ENCODE measurements at regions of chr16 and their contacts with region 1.

Region 1: DNA sequence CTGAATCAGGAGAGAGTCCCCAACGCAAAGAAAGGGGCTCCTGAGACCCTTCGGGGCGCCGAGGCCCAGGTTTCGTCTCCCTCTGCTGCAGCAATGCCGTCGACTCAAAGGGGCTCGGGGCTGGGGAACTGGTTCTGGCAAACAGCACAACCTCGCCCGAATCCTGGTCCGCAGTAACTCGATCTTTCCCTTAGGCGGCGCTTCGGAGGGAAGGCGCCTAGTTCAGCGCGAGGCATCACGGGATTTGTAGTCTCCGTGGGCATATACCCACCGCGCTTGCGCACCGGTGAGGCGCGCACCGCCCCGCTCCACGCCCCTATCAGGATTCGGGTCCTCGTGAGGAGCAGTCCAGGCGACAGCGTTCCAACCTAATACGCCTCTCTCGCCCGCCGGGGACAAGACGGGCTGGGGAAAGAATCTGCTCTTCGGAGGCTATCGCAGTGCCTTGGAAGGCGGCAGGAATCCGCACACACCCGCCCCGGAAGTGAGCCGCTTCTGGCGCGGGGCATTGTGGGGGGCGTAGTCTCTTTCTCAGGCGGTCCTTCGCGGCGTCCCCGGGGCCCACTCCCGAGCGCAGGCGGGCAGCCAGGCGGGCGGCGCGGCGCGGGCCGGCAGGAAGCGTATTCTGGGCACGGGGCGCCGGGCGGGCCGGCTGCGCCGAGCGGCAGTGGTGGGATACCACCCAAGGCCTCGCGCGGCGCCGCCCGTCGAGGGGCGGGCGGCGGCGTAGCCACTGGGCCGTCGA is at the start of gene THAP11:
- DNase-seq: peak; percentile 96
- ATAC-seq: peak; percentile 46
- H3K4me3 ChIP-seq: peak within 1 kb of the TSS; percentile 80 to 97 (median 92)
- H3K27ac ChIP-seq: peak within 1 kb of the TSS; percentile 92
- H3K4me1 ChIP-seq: peaks cover 52% of the 10 kb centered on the region
- H3K27me3 ChIP-seq: no peaks in the 10 kb centered on the region; a peak in 1 of 5 replicates
- CTCF ChIP-seq: peak; percentile 99
- EP300 ChIP-seq: 0 out of 4 replicates have a peak, but pooled peaks of 1 of the 2 experiments have one; percentile 2
- POLR2A ChIP-seq: peak in 1 of 2 experiments; percentile 68; a peak in 1 of 4 replicates
- RAD21 ChIP-seq: peak; percentile 54
- total RNA-seq, gene THAP11: 53.4 and 53.8 TPM in 2 replicates

Region 2: GRCh38 chr16:67767953-67768352 is 74.0 kb before region 1 on chr16:
- CTCF ChIA-PET with region 1: no interaction called
- POLR2A ChIA-PET with region 1: no interaction called
- in situ Hi-C with region 1: no loop called
- intact Hi-C with region 1: no loop called
- DNase-seq: no peak
- ATAC-seq: no peak
- H3K4me3 ChIP-seq: no peak overlapping the region
- H3K27ac ChIP-seq: no peak overlapping the region
- H3K4me1 ChIP-seq: no peaks in the 10 kb centered on the region
- H3K27me3 ChIP-seq: no peaks in the 10 kb centered on the region
- CTCF ChIP-seq: no peak
- EP300 ChIP-seq: no peak
- POLR2A ChIP-seq: no peak
- RAD21 ChIP-seq: no peak

Region 3: GRCh38 chr16:67857502-67858233 is 15.7 kb after region 1 on chr16:
- CTCF ChIA-PET with region 1: no interaction called
- POLR2A ChIA-PET with region 1: interaction called, 21 read pairs
- in situ Hi-C with region 1: no loop called
- intact Hi-C with region 1: loop called (anchors 1 kb)
- DNase-seq: peak; percentile 96
- ATAC-seq: peak; percentile 94
- H3K4me3 ChIP-seq: peak overlapping the region in 1 of 3 experiments; percentile 35; a peak in 2 of 6 replicates
- H3K27ac ChIP-seq: peak overlapping the region; percentile 89
- H3K4me1 ChIP-seq: peaks cover 64% of the 10 kb centered on the region
- H3K27me3 ChIP-seq: no peaks in the 10 kb centered on the region
- CTCF ChIP-seq: no peak
- EP300 ChIP-seq: peak; percentile 77 to 83; a peak in 3 of 4 replicates
- POLR2A ChIP-seq: peak in 1 of 2 experiments; percentile 51; a peak in 1 of 4 replicates
- RAD21 ChIP-seq: no peak

Region 4: DNA sequence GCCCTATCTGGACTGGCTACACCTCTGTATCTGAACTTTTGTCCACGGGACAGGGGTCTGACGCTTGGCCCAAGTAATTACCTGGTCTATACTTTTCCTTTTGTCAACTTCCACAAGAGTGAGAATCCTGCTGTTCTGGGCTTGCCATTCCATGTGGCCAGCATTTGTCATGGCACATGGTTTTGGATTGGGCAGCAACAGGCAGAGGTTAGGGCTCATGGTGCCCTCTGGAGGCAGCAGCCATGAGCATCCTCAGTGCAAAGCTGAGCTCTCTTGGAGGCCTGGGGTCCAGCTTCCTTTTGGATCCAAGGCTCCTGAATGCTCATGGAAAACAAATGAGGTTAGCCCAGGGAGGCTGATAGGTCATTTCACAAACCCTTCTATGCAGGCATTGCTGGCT is 23.4 kb after region 1 on chr16:
- CTCF ChIA-PET with region 1: interaction called, 4 read pairs
- POLR2A ChIA-PET with region 1: interaction called, 4 read pairs
- in situ Hi-C with region 1: no loop called
- intact Hi-C with region 1: loop called (anchors 1 kb)
- DNase-seq: peak; percentile 68
- ATAC-seq: peak; percentile 90
- H3K4me3 ChIP-seq: no peak overlapping the region
- H3K27ac ChIP-seq: no peak overlapping the region
- H3K4me1 ChIP-seq: no peaks in the 10 kb centered on the region
- H3K27me3 ChIP-seq: no peaks in the 10 kb centered on the region
- CTCF ChIP-seq: peak; percentile 84
- EP300 ChIP-seq: no peak
- POLR2A ChIP-seq: no peak
- RAD21 ChIP-seq: peak; percentile 91